ENCODE measurements at regions of chr12 and their contacts with region 1.

Region 1: DNA sequence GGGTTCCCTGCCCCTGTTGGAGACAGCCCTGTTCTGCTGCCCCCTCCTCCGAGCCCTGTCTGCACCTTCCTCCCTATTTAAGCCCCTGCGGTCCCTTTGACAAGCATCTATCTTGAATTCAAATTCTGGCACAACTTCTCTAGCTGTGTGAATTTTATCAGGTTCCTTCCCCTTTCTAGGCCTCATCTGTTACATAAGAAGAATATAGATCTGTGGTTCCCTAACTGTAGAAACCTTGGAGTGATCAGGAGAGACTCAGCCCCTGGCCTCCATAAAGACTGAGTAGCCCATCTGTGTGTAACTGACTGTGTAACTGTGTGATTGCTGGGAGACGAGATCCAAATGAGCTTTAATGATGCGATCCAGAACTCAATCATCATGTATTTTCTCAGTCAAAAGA is 13.0 kb upstream of the RACGAP1 start:
- H3K4me3 ChIP-seq: no peak overlapping the region
- H3K27ac ChIP-seq: no peak overlapping the region
- H3K4me1 ChIP-seq: no peaks in the 10 kb centered on the region
- CTCF ChIP-seq: no peak

Region 2: DNA sequence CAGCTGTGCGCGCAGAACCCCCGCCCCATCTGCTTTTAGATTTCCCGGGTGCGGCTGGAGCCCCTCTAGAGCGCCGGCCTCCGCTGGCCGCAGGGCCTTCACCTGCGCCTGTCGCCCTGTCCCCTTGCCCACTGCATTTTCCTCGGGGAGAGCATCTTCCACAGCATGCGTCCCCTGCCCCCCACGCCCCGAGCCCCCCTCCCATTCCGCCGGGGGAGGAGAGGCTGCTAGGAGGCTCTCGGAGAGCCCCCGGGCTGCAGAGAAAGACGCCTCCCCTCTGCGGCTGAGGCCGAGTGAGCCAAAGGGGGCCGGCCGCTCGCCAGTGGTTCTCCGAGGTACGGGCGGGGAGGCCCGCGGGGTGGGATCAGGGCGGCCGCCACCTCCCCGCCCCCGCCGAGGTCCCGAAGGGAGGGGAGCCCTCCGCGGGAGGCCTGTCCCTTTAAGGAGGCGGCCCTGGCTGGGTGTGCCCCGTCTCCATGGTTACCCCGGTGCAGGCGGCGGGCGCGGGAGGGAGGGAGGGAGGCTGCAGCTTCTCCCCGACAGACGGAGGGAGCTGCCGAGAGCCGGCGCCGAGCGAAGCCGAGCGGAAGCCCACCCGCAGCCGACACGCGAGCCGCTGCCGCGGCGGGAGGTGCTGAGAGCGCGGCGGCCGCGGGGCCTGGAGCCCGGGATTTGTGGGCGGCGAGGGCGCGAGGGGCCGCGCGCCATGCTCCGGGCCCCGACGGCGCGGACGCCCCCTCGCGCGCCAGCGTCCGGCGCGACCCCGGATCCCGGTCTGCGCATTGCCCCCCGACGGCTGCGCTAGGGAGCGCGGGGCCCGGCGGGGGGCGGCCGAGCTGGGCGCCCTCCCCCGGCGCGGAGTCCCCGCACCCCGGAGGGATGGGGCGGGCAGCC is 499.6 kb before region 1 on chr12 and contains the start of gene KCNH3:
- CTCF ChIA-PET with region 1: no interaction called
- POLR2A ChIA-PET with region 1: no interaction called
- H3K4me3 ChIP-seq: peak within 1 kb of the TSS; percentile 30
- H3K27ac ChIP-seq: peak within 1 kb of the TSS; percentile 1; the same call in 1 of the 2 replicates
- H3K4me1 ChIP-seq: peaks cover 2% of the 10 kb centered on the region; the same call in 1 of the 2 replicates
- CTCF ChIP-seq: no peak

Region 3: DNA sequence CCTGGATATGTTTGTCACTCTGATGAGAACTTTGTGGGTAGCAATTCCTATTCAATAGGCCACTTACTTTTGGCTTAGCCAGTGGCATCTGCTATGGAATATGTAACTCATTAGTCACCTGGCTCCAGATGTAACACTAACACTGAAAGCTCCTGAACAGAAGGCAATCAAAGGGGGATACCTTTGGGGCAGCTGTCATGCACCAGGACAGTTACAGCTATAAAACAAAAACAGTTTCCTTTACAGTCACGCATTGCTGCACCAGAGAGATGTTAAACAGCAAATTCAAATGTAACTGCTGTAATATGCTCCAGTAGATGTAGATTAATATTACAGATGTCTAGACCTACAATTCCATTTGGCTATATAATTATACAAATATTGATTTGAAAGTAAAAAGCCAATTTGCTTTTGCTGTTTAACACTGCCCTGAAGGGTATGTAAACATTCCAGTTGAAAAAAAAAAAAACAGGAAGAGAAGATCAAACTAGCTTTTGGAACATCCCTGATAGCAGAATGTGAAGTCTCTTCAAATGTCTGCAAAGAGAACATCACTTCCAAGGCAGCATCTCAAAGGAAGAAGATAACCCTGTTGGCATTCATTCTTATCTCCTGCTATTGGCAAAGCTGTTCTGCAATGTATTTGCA is 31.4 kb before region 1 on chr12:
- CTCF ChIA-PET with region 1: interaction called, 14 read pairs
- POLR2A ChIA-PET with region 1: no interaction called
- H3K4me3 ChIP-seq: no peak overlapping the region
- H3K27ac ChIP-seq: no peak overlapping the region
- H3K4me1 ChIP-seq: no peaks in the 10 kb centered on the region
- CTCF ChIP-seq: no peak

Region 4: GRCh38 chr12:50025187-50026059 is 12.9 kb before region 1 on chr12 and contains the start of gene RACGAP1:
- CTCF ChIA-PET with region 1: interaction called, 55 read pairs
- POLR2A ChIA-PET with region 1: interaction called, 8 read pairs
- H3K4me3 ChIP-seq: peak within 1 kb of the TSS; percentile 93
- H3K27ac ChIP-seq: peak within 1 kb of the TSS; percentile 56
- H3K4me1 ChIP-seq: 0 out of 2 replicates have a peak, but pooled peaks cover 3% of the 10 kb centered on the region
- CTCF ChIP-seq: no peak; the same call in 1 of the 2 replicates

Region 5: GRCh38 chr12:50055831-50056638 is 17.7 kb after region 1 on chr12:
- CTCF ChIA-PET with region 1: interaction called, 67 read pairs
- POLR2A ChIA-PET with region 1: no interaction called
- H3K4me3 ChIP-seq: no peak overlapping the region
- H3K27ac ChIP-seq: no peak overlapping the region
- H3K4me1 ChIP-seq: no peaks in the 10 kb centered on the region; the same call in 1 of the 2 replicates
- CTCF ChIP-seq: peak; percentile 86

Measured in HEK293 (cell line).